A673 (cell line): ENCODE measurements at regions of chr20 and their contacts with region 1.

Region 1: GRCh38 chr20:58850693-58851174 is at the start of gene GNAS-AS1:
- DNase-seq: peak; percentile 93
- H3K4me3 ChIP-seq: peak within 1 kb of the TSS; percentile 67
- H3K27ac ChIP-seq: peak within 1 kb of the TSS; percentile 19
- H3K4me1 ChIP-seq: peaks cover 8% of the 10 kb centered on the region
- H3K27me3 ChIP-seq: peaks cover 41% of the 10 kb centered on the region
- CTCF ChIP-seq: no peak
- total RNA-seq, gene GNAS-AS1: 6.7 and 7.1 TPM in 2 replicates

Region 2: DNA sequence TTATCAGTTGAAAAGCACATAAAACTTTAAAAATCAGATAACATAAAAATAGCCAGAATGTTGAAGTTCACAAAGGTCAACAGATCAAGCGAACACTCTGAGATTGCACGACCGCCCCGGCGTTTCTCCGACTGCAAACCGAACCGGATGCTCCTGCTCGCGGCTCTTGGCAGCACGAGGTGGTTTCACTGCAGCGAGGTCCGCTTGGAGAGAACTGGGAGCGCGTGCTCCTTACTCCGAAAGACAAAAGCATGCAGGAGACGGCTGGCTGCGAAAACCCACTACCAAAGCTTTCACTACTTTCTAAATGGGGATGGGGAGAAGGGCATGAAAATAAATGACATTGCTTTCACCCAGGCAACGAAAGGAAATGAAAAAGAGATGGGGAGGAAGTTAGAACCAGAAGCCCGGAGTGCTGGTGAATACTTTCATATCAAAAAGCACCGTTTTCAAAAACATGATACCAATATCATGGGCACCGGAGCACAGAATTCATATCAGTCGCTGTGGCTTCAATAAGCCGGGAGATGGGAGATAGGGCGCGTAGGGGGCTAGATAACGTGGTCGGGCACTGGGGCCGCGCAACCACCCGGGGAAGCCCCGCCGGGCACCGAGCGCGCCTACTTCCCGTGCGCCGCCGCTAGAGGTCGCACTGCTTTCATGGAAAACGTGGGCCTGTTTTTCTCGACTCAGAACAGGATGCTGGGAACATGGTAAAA is 614.0 kb before region 1 on chr20:
- CTCF ChIA-PET with region 1: no interaction called
- POLR2A ChIA-PET with region 1: no interaction called
- intact Hi-C with region 1: loop called (anchors 10 kb)
- DNase-seq: peak; percentile 84
- H3K4me3 ChIP-seq: peak overlapping the region; percentile 43
- H3K27ac ChIP-seq: no peak overlapping the region
- H3K4me1 ChIP-seq: no peaks in the 10 kb centered on the region
- H3K27me3 ChIP-seq: no peaks in the 10 kb centered on the region
- CTCF ChIP-seq: peak; percentile 97

Region 3: GRCh38 chr20:58481481-58482021 is 369.2 kb before region 1 on chr20:
- CTCF ChIA-PET with region 1: no interaction called
- POLR2A ChIA-PET with region 1: no interaction called
- intact Hi-C with region 1: loop called (anchors 5 kb)
- DNase-seq: peak; percentile 61
- H3K4me3 ChIP-seq: no peak overlapping the region
- H3K27ac ChIP-seq: no peak overlapping the region
- H3K4me1 ChIP-seq: no peaks in the 10 kb centered on the region
- H3K27me3 ChIP-seq: no peaks in the 10 kb centered on the region
- CTCF ChIP-seq: peak; percentile 78

Region 4: DNA sequence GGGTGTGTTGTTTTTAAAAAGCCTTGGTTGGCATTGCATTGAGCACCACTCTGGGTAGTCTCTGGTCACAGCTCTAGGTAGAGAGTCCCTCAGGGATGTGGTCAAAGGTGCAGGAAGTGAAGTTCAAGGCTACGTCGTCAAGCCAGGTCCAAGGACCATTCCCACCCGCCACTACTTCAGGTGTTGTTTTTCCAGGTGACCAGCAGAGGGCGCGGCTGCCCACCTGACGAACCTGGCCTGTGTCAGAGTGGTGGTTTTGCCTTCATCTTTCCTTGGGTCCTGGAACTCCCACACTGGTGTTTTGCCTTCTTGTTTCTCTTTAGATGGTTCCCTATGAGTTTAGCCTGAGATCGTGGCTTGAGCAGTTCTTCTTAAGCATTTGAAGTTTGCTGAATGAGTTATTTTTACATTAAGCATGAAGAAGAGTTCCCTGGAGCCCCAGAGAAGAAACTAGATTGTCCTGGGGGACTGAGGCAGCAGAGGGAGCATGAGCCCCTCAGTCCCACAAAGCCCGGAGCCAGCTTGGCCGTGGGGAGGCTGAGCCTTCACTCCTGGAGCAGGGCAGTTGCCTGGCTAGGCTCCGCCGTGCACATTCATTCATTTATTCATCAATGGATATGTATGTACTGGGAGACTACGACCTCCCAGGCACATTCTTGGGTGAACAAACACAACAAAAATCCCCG is 748.0 kb after region 1 on chr20:
- CTCF ChIA-PET with region 1: no interaction called
- POLR2A ChIA-PET with region 1: no interaction called
- intact Hi-C with region 1: no loop called
- DNase-seq: peak; percentile 25
- H3K4me3 ChIP-seq: no peak overlapping the region
- H3K27ac ChIP-seq: no peak overlapping the region
- H3K4me1 ChIP-seq: no peaks in the 10 kb centered on the region
- H3K27me3 ChIP-seq: peaks cover 41% of the 10 kb centered on the region
- CTCF ChIP-seq: peak; percentile 83